Stomach (tissue), 19 donors: ENCODE measurements at regions of chr20 and their contacts with region 1.

Region 1: GRCh38 chr20:11274141-11274594 is 600.4 kb upstream of the JAG1 start:
- DNase-seq: peak in 1 of 2 donors; percentile 83
- H3K4me3 ChIP-seq: no peak overlapping the region
- H3K27ac ChIP-seq: no peak overlapping the region
- H3K4me1 ChIP-seq: peaks cover 0 to 9% (median 0%) of the 10 kb centered on the region in 4 donors
- H3K27me3 ChIP-seq: no peaks in the 10 kb centered on the region
- CTCF ChIP-seq: peak in 5 of 7 experiments; percentile 5 to 59 (median 53)
- EP300 ChIP-seq: no peak
- POLR2A ChIP-seq: no peak

Region 2: DNA sequence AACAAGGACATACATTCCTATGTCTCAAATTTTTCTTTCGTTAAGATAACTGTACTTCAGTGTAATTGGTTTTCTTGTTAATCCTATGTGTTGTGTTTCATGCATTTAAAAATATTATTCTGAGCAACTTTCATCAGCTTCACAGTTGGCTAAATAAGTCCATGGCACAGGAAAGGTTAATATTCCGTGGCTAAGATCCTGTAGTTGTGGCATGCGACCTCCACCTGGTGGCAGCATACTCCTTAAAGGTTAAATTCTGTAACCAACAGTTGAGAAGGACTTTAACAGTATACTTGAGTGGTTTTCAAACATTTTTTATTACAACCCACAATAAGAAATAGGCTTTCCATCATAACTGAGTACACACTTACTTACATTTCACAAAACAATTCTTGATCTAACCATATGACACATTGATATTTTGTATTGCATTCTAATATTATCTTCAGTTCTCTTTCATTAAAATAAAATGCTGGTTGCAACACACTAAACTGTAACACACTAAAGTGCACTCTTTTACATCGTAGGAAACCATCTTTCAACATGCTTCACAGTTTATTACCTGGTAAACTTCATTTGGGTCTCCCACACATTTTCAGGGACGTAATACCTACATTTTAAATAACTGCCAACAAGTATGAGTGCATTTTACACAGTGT is 720.7 kb before region 1 on chr20:
- intact Hi-C with region 1: loop called (anchors 10 kb)
- DNase-seq: peak; percentile 72 to 88
- H3K4me3 ChIP-seq: no peak overlapping the region
- H3K27ac ChIP-seq: no peak overlapping the region
- H3K4me1 ChIP-seq: peaks cover 7 to 53% (median 20%) of the 10 kb centered on the region in 4 donors
- H3K27me3 ChIP-seq: no peaks in the 10 kb centered on the region
- CTCF ChIP-seq: peak in 5 of 7 experiments; percentile 55 to 78 (median 74)
- EP300 ChIP-seq: no peak
- POLR2A ChIP-seq: no peak